Calu3 (cell line): ENCODE measurements at regions of chr6 and their contacts with region 1.

Region 1: DNA sequence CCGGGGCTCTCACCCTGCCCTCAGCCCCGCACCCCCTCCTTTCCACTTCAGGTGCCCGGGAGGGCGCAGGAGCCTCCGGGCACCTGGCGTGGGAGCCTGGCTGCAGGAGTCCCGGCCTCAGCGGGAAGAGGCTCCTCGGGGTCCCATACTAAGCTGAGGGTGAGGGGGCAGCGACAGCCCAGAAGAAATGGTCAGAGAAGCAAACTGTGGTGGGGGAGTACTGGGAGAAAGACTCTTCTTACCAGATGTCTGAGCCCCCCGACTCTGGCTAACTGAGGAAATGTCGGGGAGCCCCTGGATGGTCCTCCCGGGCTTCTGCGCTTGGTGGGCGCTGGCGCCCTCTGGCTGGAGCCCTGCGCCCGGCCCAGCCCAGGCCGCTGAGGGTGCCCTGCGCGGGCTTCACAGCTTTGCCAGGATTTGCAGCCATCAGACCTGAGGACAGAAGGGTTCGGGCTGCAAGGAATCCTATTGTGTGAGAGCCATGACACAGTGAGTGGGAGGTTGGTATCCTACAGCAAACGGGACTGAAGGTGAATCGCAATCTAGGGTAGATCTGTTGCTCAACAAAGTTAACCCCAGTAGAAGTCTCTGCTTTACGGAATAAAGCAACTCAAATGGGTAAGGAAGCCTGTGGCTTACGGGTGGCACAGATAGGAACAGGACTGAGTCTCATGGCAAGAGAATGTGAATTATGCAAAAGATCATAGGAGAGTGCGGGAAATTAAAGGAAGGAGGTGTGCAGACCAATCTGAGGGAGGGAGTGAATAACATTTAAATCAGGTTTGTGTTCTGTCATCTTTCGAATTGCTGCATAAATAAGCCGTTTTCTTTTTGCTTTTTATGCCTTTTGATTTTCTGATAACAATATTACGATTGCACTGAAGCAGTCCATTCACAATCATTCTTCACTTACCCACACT is 639 bp upstream of the RCAN2 start:
- DNase-seq: peak; percentile 75
- H3K4me3 Mint-ChIP-seq: peak overlapping the region; percentile 73
- H3K27ac Mint-ChIP-seq: no peak overlapping the region
- H3K4me1 Mint-ChIP-seq: peaks cover 23% of the 10 kb centered on the region
- H3K27me3 Mint-ChIP-seq: peaks cover 33% of the 10 kb centered on the region
- CTCF ChIP-seq: peak; percentile 28

Region 2: GRCh38 chr6:46626228-46626909 is 134.5 kb after region 1 on chr6:
- CTCF ChIA-PET with region 1: no interaction called
- intact Hi-C with region 1: loop called (anchors 5 kb)
- DNase-seq: peak; percentile 16
- H3K4me3 Mint-ChIP-seq: no peak overlapping the region
- H3K27ac Mint-ChIP-seq: no peak overlapping the region
- H3K4me1 Mint-ChIP-seq: no peaks in the 10 kb centered on the region
- H3K27me3 Mint-ChIP-seq: no peaks in the 10 kb centered on the region
- CTCF ChIP-seq: peak; percentile 36